OCI-LY7 (cell line): ENCODE measurements at regions of chr11 and their contacts with region 1.

Region 1: GRCh38 chr11:120710354-120711131 is 199.0 kb downstream of the GRIK4 start:
- DNase-seq: no peak
- H3K4me3 ChIP-seq: no peak overlapping the region
- H3K27ac ChIP-seq: no peak overlapping the region
- H3K4me1 ChIP-seq: peaks cover 54% of the 10 kb centered on the region
- CTCF ChIP-seq: no peak

Region 2: GRCh38 chr11:120235024-120235861 is 475.3 kb before region 1 on chr11:
- CTCF ChIA-PET with region 1: no interaction called
- POLR2A ChIA-PET with region 1: no interaction called
- intact Hi-C with region 1: no loop called
- DNase-seq: peak; percentile 66
- H3K4me3 ChIP-seq: no peak overlapping the region
- H3K27ac ChIP-seq: no peak overlapping the region
- H3K4me1 ChIP-seq: no peaks in the 10 kb centered on the region
- CTCF ChIP-seq: peak; percentile 90

Region 3: DNA sequence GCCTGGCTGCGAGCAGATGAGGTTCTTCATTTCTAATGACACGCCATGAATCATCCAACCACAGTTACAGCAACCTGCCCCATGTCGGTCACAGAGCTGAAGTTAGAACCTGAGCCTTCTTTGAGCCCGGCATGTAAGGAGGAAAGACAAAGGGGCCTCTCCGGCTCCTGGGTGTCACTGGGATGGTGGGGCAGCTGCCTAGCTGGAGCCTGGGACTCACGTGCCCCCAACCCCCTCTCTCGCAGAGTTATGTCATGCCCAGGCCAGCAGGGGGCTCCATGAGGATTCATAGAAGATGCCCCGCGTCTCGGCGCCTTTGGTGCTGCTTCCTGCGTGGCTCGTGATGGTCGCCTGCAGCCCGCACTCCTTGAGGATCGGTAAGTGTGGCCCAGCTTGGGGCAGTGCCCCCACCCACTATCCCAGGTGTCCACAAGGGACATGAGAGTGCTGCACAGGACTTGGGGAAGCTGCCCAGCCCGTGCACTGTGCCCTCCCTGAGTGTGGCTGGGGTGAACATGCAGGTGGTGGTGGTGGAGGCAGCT is 50.4 kb before region 1 on chr11:
- CTCF ChIA-PET with region 1: interaction called, 5 read pairs
- POLR2A ChIA-PET with region 1: no interaction called
- intact Hi-C with region 1: loop called (anchors 2 kb)
- DNase-seq: peak; percentile 82
- H3K4me3 ChIP-seq: no peak overlapping the region
- H3K27ac ChIP-seq: no peak overlapping the region
- H3K4me1 ChIP-seq: peaks cover 33% of the 10 kb centered on the region
- CTCF ChIP-seq: peak; percentile 84

Region 4: DNA sequence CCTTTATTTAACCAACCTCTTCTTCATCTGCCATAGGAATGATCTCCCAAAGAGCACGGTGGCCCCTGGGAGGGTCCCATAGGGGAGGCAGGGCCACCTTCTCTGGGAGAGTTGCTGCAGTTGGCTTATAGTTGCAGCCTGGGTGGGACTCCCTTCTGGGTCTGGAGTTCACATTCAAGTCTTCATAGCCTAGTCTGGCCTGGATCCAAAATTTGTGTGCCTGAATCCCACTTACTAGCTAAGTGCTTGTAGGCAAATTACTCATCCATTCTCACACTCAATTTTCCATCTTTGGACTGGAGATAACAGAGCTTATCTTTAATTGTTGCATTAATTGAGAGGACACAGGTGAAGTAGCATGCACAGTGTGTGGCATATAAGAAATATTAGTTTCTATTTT is 35.4 kb before region 1 on chr11:
- CTCF ChIA-PET with region 1: no interaction called
- POLR2A ChIA-PET with region 1: no interaction called
- intact Hi-C with region 1: no loop called
- DNase-seq: no peak
- H3K4me3 ChIP-seq: no peak overlapping the region
- H3K27ac ChIP-seq: no peak overlapping the region
- H3K4me1 ChIP-seq: no peaks in the 10 kb centered on the region
- CTCF ChIP-seq: no peak

Region 5: DNA sequence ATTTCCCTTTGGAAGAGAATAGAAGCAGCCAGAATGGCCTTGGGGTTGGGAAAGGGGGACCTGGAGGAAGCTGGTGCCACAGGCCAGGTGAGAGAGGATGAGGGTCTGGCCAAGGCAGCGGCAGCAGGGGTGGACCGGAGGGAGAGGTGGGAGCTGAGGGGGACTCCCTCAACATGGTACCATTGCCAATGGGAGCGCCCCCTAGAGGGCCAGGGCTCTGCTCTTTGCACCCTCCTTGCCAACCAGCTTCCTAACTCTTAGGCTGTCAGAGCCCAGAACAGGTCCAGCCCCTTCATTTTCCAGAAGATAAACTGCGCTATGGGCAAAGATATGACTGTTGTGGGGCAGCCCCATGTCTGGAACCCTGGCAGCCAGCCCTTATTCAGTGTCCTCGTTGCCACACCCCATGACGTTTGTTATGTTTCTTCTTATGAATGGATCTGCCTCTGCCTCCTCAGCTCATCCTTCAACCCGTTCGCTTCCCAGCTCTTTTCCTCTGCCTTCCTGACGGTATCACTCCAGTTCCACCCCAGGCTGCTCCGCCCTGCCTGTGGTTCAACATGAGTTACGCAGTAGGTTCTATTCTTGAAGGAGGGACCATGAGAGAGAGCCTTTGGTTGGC is 13.8 kb before region 1 on chr11:
- CTCF ChIA-PET with region 1: interaction called, 13 read pairs
- POLR2A ChIA-PET with region 1: interaction called, 113 read pairs
- intact Hi-C with region 1: no loop called
- DNase-seq: no peak
- H3K4me3 ChIP-seq: no peak overlapping the region
- H3K27ac ChIP-seq: no peak overlapping the region
- H3K4me1 ChIP-seq: peaks cover 37% of the 10 kb centered on the region
- CTCF ChIP-seq: peak; percentile 69

Region 6: DNA sequence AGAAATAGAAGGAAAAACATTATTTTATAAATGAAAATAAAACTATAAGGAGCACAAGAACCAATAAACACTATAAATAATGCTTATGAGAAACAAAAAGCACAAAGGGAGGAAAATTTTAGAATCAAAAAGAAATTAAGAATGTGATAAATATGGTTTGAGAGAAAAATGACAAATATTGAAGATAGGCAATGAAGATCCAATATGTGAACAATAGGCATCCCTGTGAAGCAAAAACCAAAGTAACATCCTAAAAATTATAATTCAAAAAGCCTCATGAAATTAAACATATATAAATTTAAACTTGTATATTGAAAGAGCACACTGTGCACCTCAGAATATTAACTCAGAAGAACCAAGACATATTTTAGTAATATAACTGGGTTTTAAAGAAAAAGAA is 17.2 kb after region 1 on chr11:
- CTCF ChIA-PET with region 1: no interaction called
- POLR2A ChIA-PET with region 1: no interaction called
- intact Hi-C with region 1: no loop called
- DNase-seq: no peak
- H3K4me3 ChIP-seq: no peak overlapping the region
- H3K27ac ChIP-seq: no peak overlapping the region
- H3K4me1 ChIP-seq: no peaks in the 10 kb centered on the region
- CTCF ChIP-seq: no peak